ENCODE measurements at regions of chr12 and their contacts with region 1.

Region 1: GRCh38 chr12:57182921-57183790 is 33.4 kb upstream of the NXPH4 start:
- DNase-seq: peak; percentile 74
- ATAC-seq: peak; percentile 100
- H3K4me3 Mint-ChIP-seq: no peak overlapping the region
- H3K27ac Mint-ChIP-seq: peak overlapping the region; percentile 6
- H3K4me1 Mint-ChIP-seq: peaks cover 4% of the 10 kb centered on the region
- H3K27me3 Mint-ChIP-seq: peaks cover 1% of the 10 kb centered on the region
- CTCF ChIP-seq: no peak

Region 2: GRCh38 chr12:56839915-56840325 is 343.2 kb before region 1 on chr12:
- CTCF ChIA-PET with region 1: interaction called, 4 read pairs
- POLR2A ChIA-PET with region 1: no interaction called
- intact Hi-C with region 1: loop called (anchors 1 kb)
- DNase-seq: no peak
- ATAC-seq: peak; percentile 47
- H3K4me3 Mint-ChIP-seq: no peak overlapping the region
- H3K27ac Mint-ChIP-seq: no peak overlapping the region
- H3K4me1 Mint-ChIP-seq: peaks cover 12% of the 10 kb centered on the region
- H3K27me3 Mint-ChIP-seq: peaks cover 9% of the 10 kb centered on the region
- CTCF ChIP-seq: no peak

Region 3: DNA sequence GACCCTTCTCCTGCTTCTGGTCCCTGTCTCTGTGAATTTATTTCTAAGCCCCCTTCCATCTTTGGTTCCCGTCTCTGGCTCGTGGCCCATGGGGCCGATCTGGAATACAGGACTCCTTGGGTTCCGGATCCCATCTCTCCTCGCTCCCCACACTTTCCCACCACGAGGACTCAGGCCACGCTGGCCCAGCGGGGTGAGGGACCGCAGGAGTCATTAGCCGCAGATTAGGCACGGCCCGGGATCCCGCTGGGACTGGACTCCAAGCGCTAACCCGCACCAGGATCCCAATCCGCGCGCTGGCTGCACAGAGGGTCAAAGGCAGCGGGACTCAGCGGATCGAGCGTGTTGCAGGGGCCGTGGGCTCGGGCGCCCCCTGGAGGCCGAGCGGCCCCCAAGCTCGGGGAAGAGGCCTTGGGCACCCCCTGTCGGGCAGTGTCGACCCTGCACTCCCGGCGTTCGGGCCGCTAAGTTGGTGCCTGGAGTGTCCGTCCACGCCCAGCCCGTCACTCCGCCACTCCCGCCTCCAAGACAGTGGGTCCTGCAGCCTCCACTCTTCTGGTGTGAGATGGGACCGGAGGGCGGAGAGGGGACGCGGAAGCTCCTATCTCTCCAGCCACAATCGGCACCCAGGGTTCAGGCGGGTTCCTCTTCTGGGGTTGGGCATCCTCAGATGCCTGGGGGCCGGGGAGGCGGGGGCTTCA is 55.8 kb after region 1 on chr12:
- CTCF ChIA-PET with region 1: interaction called, 5 read pairs
- POLR2A ChIA-PET with region 1: interaction called, 5 read pairs
- intact Hi-C with region 1: loop called (anchors 1 kb)
- DNase-seq: peak; percentile 96
- ATAC-seq: peak; percentile 54
- H3K4me3 Mint-ChIP-seq: peak overlapping the region; percentile 89
- H3K27ac Mint-ChIP-seq: peak overlapping the region; percentile 90
- H3K4me1 Mint-ChIP-seq: peaks cover 94% of the 10 kb centered on the region
- H3K27me3 Mint-ChIP-seq: peaks cover 8% of the 10 kb centered on the region
- CTCF ChIP-seq: peak; percentile 99